ENCODE measurements at regions of chr3 and their contacts with region 1.

Region 1: GRCh38 chr3:167684388-167684993 is 30.7 kb upstream of the WDR49 start:
- DNase-seq: no peak
- ATAC-seq: peak; percentile 75
- H3K4me3 Mint-ChIP-seq: no peak overlapping the region
- H3K27ac Mint-ChIP-seq: no peak overlapping the region
- H3K4me1 Mint-ChIP-seq: no peaks in the 10 kb centered on the region
- H3K27me3 Mint-ChIP-seq: no peaks in the 10 kb centered on the region
- CTCF ChIP-seq: no peak

Region 2: GRCh38 chr3:167609156-167609555 is 75.3 kb before region 1 on chr3:
- CTCF ChIA-PET with region 1: no interaction called
- POLR2A ChIA-PET with region 1: no interaction called
- intact Hi-C with region 1: loop called (anchors 5 kb)
- DNase-seq: no peak
- ATAC-seq: no peak
- H3K4me3 Mint-ChIP-seq: no peak overlapping the region
- H3K27ac Mint-ChIP-seq: no peak overlapping the region
- H3K4me1 Mint-ChIP-seq: no peaks in the 10 kb centered on the region
- H3K27me3 Mint-ChIP-seq: peaks cover 2% of the 10 kb centered on the region
- CTCF ChIP-seq: no peak

Region 3: GRCh38 chr3:167662919-167663400 is 21.5 kb before region 1 on chr3:
- CTCF ChIA-PET with region 1: no interaction called
- POLR2A ChIA-PET with region 1: no interaction called
- intact Hi-C with region 1: no loop called
- DNase-seq: no peak
- ATAC-seq: no peak
- H3K4me3 Mint-ChIP-seq: no peak overlapping the region
- H3K27ac Mint-ChIP-seq: no peak overlapping the region
- H3K4me1 Mint-ChIP-seq: no peaks in the 10 kb centered on the region
- H3K27me3 Mint-ChIP-seq: peaks cover 6% of the 10 kb centered on the region
- CTCF ChIP-seq: no peak

Region 4: GRCh38 chr3:168989396-168989795 is 1304.9 kb after region 1 on chr3:
- CTCF ChIA-PET with region 1: no interaction called
- POLR2A ChIA-PET with region 1: no interaction called
- intact Hi-C with region 1: no loop called
- DNase-seq: no peak
- ATAC-seq: no peak
- H3K4me3 Mint-ChIP-seq: no peak overlapping the region
- H3K27ac Mint-ChIP-seq: no peak overlapping the region
- H3K4me1 Mint-ChIP-seq: no peaks in the 10 kb centered on the region
- H3K27me3 Mint-ChIP-seq: no peaks in the 10 kb centered on the region
- CTCF ChIP-seq: no peak